Mammary epithelial cell (primary cell): ENCODE measurements at regions of chr4 and their contacts with region 1.

Region 1: DNA sequence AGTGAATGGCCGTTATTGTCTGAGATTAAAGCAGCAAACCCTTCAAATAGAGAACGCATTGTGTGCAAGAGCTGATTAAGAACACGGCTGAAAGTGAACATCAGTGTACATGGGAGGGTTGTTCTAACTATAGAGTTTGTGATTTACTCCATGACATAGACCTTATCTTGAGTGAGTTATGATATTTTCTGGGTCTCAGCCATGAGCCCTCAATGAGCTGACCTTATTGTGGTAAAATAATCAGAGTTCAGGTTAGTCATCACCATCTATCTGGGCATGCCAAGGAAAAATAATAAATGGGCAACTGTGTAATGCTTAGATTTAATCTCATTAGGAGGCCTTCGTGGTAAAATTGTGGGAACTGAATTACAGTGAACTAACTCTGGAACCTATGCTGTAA is 33.2 kb upstream of the CLDN24 start:
- DNase-seq: peak; percentile 97
- H3K4me3 ChIP-seq: no peak overlapping the region
- H3K27ac ChIP-seq: peak overlapping the region; percentile 57
- H3K4me1 ChIP-seq: peaks cover 40% of the 10 kb centered on the region
- H3K27me3 ChIP-seq: no peaks in the 10 kb centered on the region
- CTCF ChIP-seq: no peak

Region 2: GRCh38 chr4:181830404-181831035 is 1524.9 kb before region 1 on chr4:
- CTCF ChIA-PET with region 1: no interaction called
- dilution Hi-C with region 1: no loop called
- in situ Hi-C with region 1: no loop called
- intact Hi-C with region 1: no loop called
- DNase-seq: no peak
- H3K4me3 ChIP-seq: no peak overlapping the region
- H3K27ac ChIP-seq: no peak overlapping the region
- H3K4me1 ChIP-seq: no peaks in the 10 kb centered on the region
- H3K27me3 ChIP-seq: no peaks in the 10 kb centered on the region
- CTCF ChIP-seq: no peak

Region 3: GRCh38 chr4:183261953-183262775 is 93.2 kb before region 1 on chr4:
- CTCF ChIA-PET with region 1: no interaction called
- dilution Hi-C with region 1: loop called (anchors 5 kb)
- in situ Hi-C with region 1: no loop called
- intact Hi-C with region 1: no loop called
- DNase-seq: peak; percentile 64
- H3K4me3 ChIP-seq: no peak overlapping the region
- H3K27ac ChIP-seq: no peak overlapping the region
- H3K4me1 ChIP-seq: no peaks in the 10 kb centered on the region
- H3K27me3 ChIP-seq: no peaks in the 10 kb centered on the region
- CTCF ChIP-seq: peak; percentile 85 to 92

Region 4: GRCh38 chr4:183335369-183335940 is 19.9 kb before region 1 on chr4:
- CTCF ChIA-PET with region 1: no interaction called
- dilution Hi-C with region 1: no loop called
- in situ Hi-C with region 1: no loop called
- intact Hi-C with region 1: loop called (anchors 2 kb)
- DNase-seq: peak; percentile 88
- H3K4me3 ChIP-seq: no peak overlapping the region
- H3K27ac ChIP-seq: peak overlapping the region; percentile 1
- H3K4me1 ChIP-seq: peaks cover 32% of the 10 kb centered on the region
- H3K27me3 ChIP-seq: no peaks in the 10 kb centered on the region
- CTCF ChIP-seq: no peak